Activated CD4-positive, alpha-beta memory T cell treated with anti-CD3 and anti-CD28 coated beads for 36 hours (primary cell): ENCODE measurements at regions of chr5 and their contacts with region 1.

Region 1: DNA sequence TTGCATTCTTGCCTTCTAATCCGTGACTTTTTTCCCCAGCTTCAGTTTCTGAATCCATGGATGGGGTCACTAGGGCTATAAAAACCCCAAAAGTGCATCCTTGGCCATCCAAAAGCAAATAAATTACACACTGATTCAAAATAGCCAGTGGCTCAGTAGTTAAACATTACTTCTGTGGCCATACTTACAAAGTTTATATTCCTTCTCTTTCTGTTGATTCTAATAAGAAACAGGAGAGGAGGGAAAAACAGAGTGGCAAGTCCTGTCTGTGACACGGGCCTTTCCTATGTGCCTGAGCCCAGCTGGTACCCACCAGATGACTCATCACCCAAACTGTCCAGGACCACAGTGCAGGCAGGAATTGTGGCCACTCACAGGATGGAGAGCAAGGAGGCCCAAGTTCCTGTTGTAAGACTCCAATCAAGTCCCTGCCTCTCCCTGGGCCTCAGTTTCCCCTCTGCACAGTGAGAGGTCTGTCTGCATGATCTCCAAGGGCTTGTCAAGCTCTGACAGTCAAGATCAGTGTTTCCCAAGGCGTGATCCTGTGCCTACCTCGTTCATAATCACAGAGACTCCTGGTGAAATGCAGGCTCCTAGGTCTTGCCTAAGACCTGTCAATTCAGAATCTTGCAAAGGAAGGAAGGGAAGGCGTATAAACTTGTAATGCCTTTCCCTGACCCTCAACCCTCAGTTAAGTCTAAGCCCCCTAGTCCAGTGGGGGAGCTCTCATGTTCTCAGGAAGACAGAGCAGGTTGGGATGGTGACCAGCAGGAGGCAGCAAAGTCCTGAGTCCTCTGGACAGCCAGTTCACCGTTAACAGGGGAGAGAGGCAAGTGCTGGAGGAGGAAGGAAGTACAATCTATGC is 29.5 kb downstream of the TNIP1 start:
- DNase-seq: peak; percentile 79
- H3K4me3 Mint-ChIP-seq: no peak overlapping the region
- H3K27ac Mint-ChIP-seq: peak overlapping the region; percentile 67
- H3K4me1 Mint-ChIP-seq: peaks cover 15% of the 10 kb centered on the region
- H3K27me3 Mint-ChIP-seq: no peaks in the 10 kb centered on the region

Region 2: DNA sequence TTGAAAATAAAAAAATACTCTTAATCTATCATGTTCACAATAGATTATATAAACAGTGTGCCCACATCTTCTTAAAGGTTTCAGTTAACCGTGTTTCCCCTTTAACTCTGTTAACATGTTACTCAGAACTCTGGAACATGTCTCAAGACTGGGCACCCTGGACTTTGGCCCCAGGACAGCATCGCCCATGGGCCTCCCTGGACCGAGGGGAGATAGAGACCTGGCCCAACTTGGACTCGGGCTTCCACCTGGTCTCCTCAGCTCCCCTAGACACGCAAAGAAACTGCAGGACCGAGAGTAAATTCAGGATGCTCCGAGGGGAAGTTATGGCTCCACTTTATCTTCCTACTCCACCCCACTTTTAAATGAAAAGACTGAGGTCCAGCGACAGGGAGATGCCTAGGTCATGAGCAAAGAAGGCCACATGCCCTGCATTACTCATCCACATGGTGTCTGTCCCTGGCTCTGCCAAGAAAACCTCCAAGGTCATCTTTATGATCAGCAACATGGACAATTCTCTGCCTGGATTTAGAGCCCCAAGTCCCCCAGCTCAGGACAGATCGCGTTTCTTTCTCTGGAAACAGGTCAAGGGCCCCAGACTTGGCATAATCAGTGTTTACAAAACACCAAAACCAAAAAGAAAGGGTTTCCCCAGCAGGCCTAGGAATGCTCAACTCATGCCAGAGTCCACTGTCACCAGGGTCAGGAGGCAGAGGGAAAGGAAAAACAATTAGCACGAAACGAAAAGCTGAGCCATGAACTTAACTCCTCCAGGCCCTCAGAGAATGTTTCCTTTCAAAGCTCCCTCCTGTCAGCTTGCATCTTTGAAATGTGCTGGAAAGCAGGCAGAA is 13.5 kb before region 1 on chr5:
- CTCF ChIA-PET with region 1: interaction called, 11 read pairs
- POLR2A ChIA-PET with region 1: interaction called, 3 read pairs
- intact Hi-C with region 1: no loop called
- DNase-seq: no peak
- H3K4me3 Mint-ChIP-seq: no peak overlapping the region
- H3K27ac Mint-ChIP-seq: no peak overlapping the region
- H3K4me1 Mint-ChIP-seq: peaks cover 10% of the 10 kb centered on the region
- H3K27me3 Mint-ChIP-seq: no peaks in the 10 kb centered on the region

Region 3: GRCh38 chr5:151068433-151069197 is 17.3 kb after region 1 on chr5:
- CTCF ChIA-PET with region 1: interaction called, 101 read pairs
- POLR2A ChIA-PET with region 1: interaction called, 3 read pairs
- intact Hi-C with region 1: no loop called
- DNase-seq: peak; percentile 80
- H3K4me3 Mint-ChIP-seq: peak overlapping the region; percentile 60
- H3K27ac Mint-ChIP-seq: peak overlapping the region; percentile 94
- H3K4me1 Mint-ChIP-seq: peaks cover 98% of the 10 kb centered on the region
- H3K27me3 Mint-ChIP-seq: no peaks in the 10 kb centered on the region

Region 4: DNA sequence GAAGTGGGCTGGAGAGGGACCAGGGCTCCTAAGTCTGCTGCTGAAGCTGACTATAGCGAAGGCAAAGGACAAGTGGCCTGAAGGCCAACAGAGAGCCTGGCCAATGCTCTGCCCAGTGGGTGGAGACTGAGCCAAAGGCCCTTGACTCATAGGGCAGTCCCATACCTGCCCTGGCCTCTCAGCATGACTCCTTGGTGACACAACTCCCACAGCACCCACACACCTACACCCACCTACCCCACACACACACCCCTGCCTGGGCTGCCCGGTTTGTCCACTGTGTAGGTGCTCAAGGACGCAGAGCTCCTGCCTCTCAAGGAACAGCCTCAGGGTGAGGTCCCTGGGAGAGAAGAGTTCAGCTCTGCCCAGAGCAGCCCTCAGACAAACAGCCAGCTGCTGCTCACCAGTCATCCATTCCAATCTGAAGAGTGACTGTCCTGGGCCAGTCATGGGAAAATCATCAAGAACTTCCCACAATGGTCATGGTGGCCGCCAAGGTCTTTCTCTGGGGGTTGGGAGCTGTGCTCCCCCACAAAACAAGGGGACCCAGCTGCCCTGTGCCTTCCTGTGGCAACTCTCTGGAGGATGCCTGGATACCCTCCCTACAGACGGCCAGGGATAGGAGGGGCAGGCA is 24.5 kb after region 1 on chr5:
- CTCF ChIA-PET with region 1: interaction called, 101 read pairs
- POLR2A ChIA-PET with region 1: interaction called, 3 read pairs
- intact Hi-C with region 1: no loop called
- DNase-seq: peak; percentile 63
- H3K4me3 Mint-ChIP-seq: peak overlapping the region; percentile 85
- H3K27ac Mint-ChIP-seq: peak overlapping the region; percentile 90
- H3K4me1 Mint-ChIP-seq: peaks cover 77% of the 10 kb centered on the region
- H3K27me3 Mint-ChIP-seq: no peaks in the 10 kb centered on the region

Region 5: DNA sequence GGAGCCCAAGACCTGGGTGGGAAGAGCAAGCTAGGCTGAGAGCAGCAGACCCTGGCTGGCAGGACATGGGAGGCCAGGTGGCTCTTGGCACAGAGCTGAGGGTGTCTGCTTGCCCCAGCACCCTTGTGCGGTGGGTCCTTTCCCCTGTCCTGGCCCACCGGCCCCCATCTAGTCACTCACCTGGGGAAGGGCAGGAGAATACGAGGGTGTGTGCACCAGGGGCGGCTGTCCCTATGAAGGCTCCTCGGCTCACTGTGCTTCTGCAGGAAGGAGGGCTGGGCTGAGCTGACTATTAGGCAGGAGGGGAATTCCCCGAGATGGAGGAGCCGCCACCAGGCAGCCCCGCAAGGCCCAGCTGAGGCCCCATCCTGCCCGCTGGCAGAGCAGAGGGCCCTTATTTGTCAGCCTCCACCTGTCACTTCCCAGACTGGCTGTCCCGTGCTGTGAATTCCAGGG is 35.6 kb after region 1 on chr5:
- CTCF ChIA-PET with region 1: interaction called, 13 read pairs
- POLR2A ChIA-PET with region 1: interaction called, 3 read pairs
- intact Hi-C with region 1: no loop called
- DNase-seq: peak; percentile 85
- H3K4me3 Mint-ChIP-seq: peak overlapping the region; percentile 89
- H3K27ac Mint-ChIP-seq: peak overlapping the region; percentile 89
- H3K4me1 Mint-ChIP-seq: peaks cover 54% of the 10 kb centered on the region
- H3K27me3 Mint-ChIP-seq: no peaks in the 10 kb centered on the region

Region 6: DNA sequence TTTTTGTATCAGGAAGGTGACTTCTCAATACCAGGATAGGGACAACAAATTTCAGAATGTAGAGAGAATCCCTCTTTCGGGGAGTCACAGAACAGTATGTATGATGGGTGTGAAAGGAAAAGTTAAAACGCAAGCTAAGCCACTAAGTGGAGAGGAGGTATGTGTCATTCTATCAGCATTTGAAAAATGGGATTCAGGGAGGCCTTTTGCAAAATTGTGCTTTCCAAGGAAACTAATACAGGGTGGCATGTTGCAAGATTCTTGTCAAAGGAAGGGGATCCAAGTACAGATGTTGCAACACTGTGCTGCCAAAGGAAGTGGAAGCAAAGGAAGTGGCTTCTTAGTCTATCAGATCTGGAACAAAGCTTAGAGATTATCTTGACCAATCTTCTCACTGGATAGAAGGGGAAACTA is 42.2 kb after region 1 on chr5:
- CTCF ChIA-PET with region 1: interaction called, 13 read pairs
- POLR2A ChIA-PET with region 1: interaction called, 4 read pairs
- intact Hi-C with region 1: no loop called
- DNase-seq: no peak
- H3K4me3 Mint-ChIP-seq: peak overlapping the region; percentile 65
- H3K27ac Mint-ChIP-seq: peak overlapping the region; percentile 92
- H3K4me1 Mint-ChIP-seq: peaks cover 64% of the 10 kb centered on the region
- H3K27me3 Mint-ChIP-seq: no peaks in the 10 kb centered on the region

Region 7: DNA sequence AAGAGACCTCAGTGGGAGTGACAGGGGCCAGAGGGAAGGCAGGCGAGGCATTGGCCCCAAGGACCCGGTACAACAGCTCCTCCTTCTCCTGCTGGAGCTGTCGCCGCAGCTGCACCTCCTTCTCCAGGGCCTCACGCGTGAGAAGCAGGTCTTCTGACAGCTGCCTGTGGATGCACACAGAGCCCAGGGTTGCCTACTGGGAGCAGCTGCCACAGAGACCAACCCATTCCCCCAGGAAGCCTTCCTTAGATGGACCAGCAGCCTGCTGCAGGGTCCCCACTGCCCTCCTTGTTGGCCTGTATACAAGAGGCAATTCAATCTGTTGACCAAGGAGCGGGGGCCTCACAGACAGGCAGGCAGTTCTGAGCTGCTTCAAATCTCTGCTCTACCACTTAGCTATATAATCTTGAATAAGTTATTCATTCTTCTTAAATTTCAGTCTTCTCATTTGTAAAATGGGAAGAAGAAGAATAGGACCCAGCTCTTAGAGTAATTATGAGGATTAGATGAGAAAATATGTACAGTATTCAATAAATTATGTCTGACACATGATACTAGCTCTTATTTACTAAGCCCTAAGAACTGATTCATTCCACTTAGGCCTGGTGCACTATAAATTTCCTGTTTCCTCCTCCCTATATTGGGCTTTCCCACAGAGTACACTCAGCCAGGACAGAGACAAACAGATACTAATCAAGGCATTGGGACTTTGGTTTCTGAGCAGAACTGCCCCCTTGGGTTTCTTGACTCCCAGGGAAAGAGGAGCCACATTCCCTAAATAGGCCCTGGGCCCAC is 132.3 kb after region 1 on chr5:
- CTCF ChIA-PET with region 1: no interaction called
- POLR2A ChIA-PET with region 1: no interaction called
- intact Hi-C with region 1: no loop called
- DNase-seq: no peak
- H3K4me3 Mint-ChIP-seq: no peak overlapping the region
- H3K27ac Mint-ChIP-seq: no peak overlapping the region
- H3K4me1 Mint-ChIP-seq: peaks cover 5% of the 10 kb centered on the region
- H3K27me3 Mint-ChIP-seq: no peaks in the 10 kb centered on the region